ENCODE measurements at regions of chr2 and their contacts with region 1.

Region 1: GRCh38 chr2:223101340-223102039 is 49.5 kb downstream of the KCNE4 start:
- DNase-seq: no peak
- H3K4me3 ChIP-seq: no peak overlapping the region
- H3K27ac ChIP-seq: peak overlapping the region in 1 of 2 donors; percentile 24
- H3K4me1 ChIP-seq: peaks cover 0 to 4% of the 10 kb centered on the region in 2 donors
- H3K27me3 ChIP-seq: no peaks in the 10 kb centered on the region
- CTCF ChIP-seq: peak in 2 of 3 experiments; percentile 19 to 41

Region 2: DNA sequence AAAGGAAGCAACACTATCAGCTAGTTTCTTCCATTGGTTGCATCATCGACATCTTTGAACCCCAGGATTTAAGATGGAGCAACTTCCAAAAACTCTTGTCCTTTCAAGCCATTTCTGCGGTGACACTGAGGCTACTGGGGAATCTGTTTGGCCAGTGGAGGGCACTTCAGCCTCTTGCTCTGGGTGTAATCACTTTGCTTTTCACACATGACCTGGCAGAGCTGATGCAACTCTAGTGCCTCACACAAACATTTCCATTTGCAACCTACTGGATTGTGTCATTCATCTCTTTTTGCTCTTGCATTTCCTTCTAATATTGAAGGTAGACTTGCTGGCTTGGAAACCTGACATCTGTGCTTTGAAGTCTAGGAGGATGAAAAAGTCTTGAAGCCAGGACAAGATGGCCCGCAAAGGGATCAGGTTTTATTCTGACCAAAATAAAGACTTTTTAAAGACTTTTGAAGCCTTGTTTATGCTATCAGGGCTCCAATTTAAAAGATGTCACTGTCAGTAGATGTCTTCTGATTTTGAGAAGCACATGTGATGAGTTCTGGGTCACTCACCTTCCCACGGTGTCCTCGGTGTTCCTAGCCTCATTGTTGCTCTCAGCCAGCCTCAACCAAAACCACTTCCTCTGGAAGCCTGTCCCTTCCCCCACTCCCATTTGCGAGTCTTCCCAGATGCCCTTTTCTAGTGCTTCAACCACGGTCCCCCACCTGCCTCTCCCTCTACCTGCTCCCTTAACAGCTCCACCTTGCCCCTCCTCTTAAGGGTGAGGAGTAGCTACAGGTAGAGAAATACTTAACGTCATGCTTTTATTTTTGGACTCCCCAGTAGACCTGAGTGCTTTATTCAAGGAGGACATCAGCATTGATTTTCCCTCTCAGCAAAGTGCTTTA is 119.2 kb before region 1 on chr2:
- intact Hi-C with region 1: loop called (anchors 5 kb)
- DNase-seq: peak in 1 of 2 donors; percentile 76
- H3K4me3 ChIP-seq: no peak overlapping the region
- H3K27ac ChIP-seq: no peak overlapping the region
- H3K4me1 ChIP-seq: no peaks in the 10 kb centered on the region
- H3K27me3 ChIP-seq: no peaks in the 10 kb centered on the region
- CTCF ChIP-seq: peak; percentile 34 to 70 (median 48)

Region 3: DNA sequence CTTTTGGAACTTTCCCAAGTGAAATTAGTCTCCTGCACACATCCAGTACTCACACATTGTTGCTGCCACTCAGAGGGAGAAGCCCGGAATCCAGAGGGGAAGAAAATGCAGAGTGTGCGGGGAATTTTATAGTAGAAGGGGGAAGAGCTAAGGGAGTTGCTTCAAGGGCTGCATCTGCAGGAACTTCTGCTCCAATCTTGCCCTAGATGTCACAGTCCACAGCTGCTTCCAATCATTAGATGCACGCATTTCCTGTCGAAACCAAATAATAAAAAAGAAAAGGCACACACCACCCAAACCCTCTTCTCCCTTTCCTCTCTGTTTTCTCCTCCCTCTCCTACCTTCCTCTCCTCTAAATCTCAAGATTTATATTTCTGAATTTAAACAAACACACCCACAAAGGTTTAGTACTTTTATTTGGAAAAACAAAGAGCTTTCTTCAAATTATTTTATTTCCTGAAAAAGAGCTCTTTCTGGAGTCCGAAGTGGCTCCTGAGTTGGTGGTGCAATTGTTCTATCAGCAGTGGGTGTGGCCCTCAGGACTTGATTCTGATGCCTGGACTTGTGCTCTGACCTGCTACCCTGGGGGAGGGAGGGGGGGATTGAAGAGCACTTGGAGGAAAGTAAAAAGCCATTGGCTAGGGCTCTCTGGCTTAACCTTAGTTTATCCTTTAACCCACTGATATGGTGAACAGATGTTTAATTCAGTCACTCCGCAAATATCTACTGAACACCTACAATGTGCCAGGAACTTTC is 22.5 kb after region 1 on chr2:
- intact Hi-C with region 1: no loop called
- DNase-seq: no peak
- H3K4me3 ChIP-seq: no peak overlapping the region
- H3K27ac ChIP-seq: no peak overlapping the region
- H3K4me1 ChIP-seq: no peaks in the 10 kb centered on the region
- H3K27me3 ChIP-seq: no peaks in the 10 kb centered on the region
- CTCF ChIP-seq: no peak

Measured in ascending aorta (tissue), 2 donors.